GM10248 (cell line): ENCODE measurements at regions of chr2 and their contacts with region 1.

Region 1: DNA sequence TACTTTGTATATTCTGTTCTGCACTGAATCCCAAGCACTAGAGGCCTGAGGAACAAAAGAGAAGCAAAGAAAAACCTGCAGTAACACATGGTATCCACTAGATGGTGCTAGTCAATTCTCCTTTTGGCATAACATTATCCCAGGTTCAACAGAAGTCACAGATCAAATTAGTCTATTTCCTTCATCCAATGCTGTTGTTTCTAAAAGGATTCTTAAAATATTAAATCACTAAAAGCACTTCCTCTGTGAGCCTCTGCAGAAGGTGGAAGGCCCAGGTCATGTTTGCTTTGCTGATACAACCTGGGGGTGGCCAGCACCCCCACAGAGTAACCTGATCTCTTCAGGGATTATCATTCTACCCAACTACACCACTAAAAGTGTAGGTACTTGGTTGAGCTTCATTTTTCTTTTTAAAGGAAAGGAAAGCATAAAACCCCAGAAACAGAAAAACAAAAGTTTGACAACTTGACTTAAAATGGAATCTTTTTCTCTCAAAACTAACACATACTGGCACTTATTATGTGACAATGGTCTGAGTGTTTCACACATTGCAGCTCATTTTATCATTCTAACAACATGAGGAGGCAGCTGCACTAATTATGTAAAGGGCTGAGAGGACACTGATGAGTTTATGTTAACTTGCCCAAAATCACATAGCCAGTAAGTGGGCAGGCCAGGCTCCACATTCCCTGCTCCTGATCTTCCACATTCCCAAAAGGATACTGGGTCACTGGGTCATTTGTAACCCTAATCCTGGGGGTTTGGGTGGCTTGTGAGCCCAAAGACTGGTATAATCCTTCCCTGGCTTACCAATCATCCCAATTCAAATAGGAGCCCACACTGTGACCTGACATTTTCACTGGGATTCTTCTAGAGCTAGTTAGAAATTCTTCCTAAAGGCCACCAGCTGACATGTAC is 66.8 kb upstream of the DNER start:
- DNase-seq: peak; percentile 45
- CTCF ChIP-seq: peak; percentile 78

Region 2: DNA sequence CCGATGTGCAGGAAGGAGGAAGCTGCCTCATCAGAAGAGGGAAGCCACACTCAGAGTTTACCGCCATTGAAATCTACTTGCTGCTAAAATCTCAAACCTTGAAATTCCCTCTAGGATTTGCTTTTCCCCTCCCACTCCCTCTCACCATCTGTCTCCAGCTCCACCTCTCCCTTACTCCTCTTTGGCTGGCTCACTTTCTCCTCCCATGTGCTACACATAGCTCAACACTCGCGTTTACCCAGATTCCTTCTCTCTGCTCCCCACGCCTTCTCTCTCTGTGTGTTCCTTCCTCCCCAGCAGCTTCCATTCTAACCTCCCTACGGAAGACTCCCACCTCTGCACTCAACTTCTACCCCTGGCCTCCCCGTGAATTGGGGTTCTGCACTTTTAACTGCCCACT is 209.9 kb before region 1 on chr2:
- CTCF ChIA-PET with region 1: no interaction called
- POLR2A ChIA-PET with region 1: no interaction called
- DNase-seq: no peak
- CTCF ChIP-seq: no peak

Region 3: GRCh38 chr2:229761663-229762062 is 19.5 kb before region 1 on chr2:
- CTCF ChIA-PET with region 1: interaction called, 17 read pairs
- POLR2A ChIA-PET with region 1: no interaction called
- DNase-seq: no peak
- CTCF ChIP-seq: no peak

Region 4: DNA sequence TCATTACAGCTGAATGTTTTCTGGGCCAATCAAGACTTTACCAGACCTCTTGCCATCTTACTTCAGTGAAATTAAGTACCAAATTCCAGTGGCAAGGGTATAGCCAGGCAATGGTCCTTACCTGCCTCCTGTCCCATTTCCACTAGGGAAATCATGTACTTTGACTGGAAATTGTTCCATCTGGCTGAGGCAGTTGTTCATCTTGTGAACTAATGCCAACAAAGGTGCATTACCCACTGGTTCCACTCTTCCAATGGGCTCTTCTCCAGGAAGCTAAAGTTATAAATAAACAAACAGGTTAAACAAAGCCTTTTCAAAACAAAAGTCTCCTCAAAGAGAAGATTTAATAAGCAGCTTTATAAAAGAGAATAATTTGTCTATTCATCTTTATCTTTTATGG is 13.9 kb after region 1 on chr2:
- CTCF ChIA-PET with region 1: interaction called, 72 read pairs
- POLR2A ChIA-PET with region 1: no interaction called
- DNase-seq: no peak
- CTCF ChIP-seq: no peak

Region 5: DNA sequence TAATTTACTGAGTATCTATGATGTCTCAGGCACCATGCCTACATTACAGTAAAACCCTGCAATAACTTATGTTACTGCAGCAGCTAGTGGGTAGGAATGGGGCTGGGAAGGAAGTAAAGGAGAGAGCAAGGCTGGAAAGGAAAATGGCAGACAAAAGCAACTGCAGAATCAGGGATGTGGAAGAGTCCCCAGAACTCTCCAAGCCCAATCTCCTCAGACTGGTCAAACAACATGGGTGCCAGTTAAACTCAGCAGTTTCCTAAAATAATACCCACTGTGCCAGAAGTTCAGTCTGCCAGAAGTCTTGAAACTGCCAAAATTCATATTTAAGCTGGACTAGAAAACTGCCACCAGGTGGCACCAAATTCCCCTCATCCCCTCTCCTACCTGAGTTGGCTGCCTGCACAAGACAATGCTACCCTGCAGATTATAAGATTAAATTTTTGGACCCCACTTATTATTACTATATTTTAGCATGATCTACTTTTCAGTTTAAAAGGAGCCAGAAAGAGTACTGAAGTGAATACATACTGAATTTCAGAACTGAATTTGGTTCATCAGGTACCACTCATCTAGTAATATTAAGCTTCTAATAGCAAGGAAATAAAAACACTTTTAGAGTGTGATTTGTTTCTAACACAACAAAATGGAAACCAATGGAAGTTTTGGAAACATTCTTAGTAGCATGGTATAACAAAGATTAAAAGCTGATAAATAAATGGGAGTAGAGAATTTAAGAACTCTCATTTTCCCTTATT is 20.1 kb after region 1 on chr2:
- CTCF ChIA-PET with region 1: interaction called, 72 read pairs
- POLR2A ChIA-PET with region 1: no interaction called
- DNase-seq: peak; percentile 67
- CTCF ChIP-seq: peak; percentile 59

Region 6: DNA sequence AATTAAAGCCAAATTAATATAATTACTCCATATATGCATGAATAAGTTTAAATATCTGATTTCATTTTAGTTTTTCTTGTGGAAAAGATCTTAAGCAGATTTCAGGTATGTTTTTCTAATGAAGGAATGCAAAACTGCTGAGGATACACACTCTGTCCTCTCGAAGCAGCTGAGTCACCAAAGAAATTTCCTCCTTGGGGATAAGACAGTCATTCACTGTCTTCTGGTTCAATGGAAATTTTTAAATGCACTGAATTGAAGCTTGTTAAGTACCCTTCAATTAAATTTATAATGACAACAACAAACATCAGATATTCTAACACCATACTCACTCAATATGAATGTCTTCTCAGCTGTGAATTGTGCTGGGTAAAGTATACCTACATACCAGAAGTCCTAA is 34.7 kb after region 1 on chr2:
- CTCF ChIA-PET with region 1: interaction called, 13 read pairs
- POLR2A ChIA-PET with region 1: no interaction called
- DNase-seq: no peak
- CTCF ChIP-seq: no peak

Region 7: GRCh38 chr2:229835596-229836283 is 54.6 kb after region 1 on chr2:
- CTCF ChIA-PET with region 1: interaction called, 21 read pairs
- POLR2A ChIA-PET with region 1: no interaction called
- DNase-seq: no peak
- CTCF ChIP-seq: no peak

Region 8: GRCh38 chr2:229910832-229911412 is 129.8 kb after region 1 on chr2:
- CTCF ChIA-PET with region 1: interaction called, 12 read pairs
- POLR2A ChIA-PET with region 1: no interaction called
- DNase-seq: peak; percentile 45
- CTCF ChIP-seq: peak; percentile 58